Activated CD4-positive, alpha-beta memory T cell treated with anti-CD3 and anti-CD28 coated beads for 36 hours (primary cell): ENCODE measurements at regions of chr11 and their contacts with region 1.

Region 1: DNA sequence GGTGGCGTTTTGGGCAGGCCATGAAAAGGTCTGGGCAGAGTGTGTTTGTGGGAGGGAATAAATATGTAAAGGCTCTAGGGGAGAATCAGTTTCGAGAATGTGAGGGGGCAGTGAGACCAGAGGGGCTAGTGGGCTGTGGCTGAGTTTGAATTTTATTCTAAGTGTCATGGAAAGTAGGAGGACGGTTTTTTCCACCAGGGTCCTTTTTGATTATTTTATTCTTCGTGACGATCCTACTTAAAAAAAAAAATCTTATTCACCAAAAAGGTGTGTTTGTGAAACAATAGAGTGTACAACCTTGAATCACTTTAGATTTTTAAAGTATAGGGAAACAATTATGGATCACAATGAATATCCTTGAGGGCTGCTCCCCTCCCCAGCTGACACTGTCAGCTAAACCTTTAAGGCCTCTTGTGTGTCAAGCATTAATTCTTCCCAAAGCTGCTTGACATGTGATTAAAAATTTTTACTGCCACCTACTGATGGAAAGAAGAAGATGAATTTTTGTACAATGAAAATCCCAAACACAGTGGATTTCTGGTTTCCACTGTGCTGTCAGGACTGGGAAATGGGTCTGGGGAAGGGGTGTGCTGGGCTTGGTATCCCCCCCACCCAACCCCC is 107.5 kb upstream of the OR4B1 start:
- DNase-seq: no peak
- H3K4me3 Mint-ChIP-seq: no peak overlapping the region
- H3K27ac Mint-ChIP-seq: peak overlapping the region; percentile 92
- H3K4me1 Mint-ChIP-seq: peaks cover 47% of the 10 kb centered on the region
- H3K27me3 Mint-ChIP-seq: no peaks in the 10 kb centered on the region

Region 2: GRCh38 chr11:47766305-47767227 is 342.6 kb before region 1 on chr11:
- CTCF ChIA-PET with region 1: no interaction called
- POLR2A ChIA-PET with region 1: no interaction called
- intact Hi-C with region 1: loop called (anchors 2 kb)
- DNase-seq: peak; percentile 88
- H3K4me3 Mint-ChIP-seq: peak overlapping the region; percentile 91
- H3K27ac Mint-ChIP-seq: peak overlapping the region; percentile 100
- H3K4me1 Mint-ChIP-seq: peaks cover 18% of the 10 kb centered on the region
- H3K27me3 Mint-ChIP-seq: no peaks in the 10 kb centered on the region

Region 3: DNA sequence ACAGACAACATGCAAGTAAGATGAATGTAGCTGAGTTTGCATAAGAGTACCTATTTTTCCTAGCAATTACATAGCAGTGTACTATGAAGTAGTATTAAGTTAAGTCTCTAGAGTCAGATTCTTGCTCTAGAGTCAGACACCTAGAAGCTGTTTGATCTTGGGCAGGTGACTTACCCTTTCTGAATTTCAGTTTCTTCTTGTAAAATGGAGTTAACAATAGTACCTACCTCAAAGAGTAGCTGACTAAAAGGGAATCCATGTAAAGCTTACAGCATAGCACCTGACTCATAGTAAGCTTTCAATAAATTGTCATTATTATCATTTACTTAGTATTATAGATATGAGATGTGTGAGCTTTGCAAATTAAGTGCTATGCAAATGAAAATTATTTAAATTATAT is 176.6 kb before region 1 on chr11:
- CTCF ChIA-PET with region 1: interaction called, 227 read pairs
- POLR2A ChIA-PET with region 1: interaction called, 8 read pairs
- intact Hi-C with region 1: loop called (anchors 1 kb)
- DNase-seq: no peak
- H3K4me3 Mint-ChIP-seq: no peak overlapping the region
- H3K27ac Mint-ChIP-seq: no peak overlapping the region
- H3K4me1 Mint-ChIP-seq: peaks cover 16% of the 10 kb centered on the region
- H3K27me3 Mint-ChIP-seq: no peaks in the 10 kb centered on the region

Region 4: GRCh38 chr11:47981050-47981621 is 128.0 kb before region 1 on chr11:
- CTCF ChIA-PET with region 1: interaction called, 18 read pairs
- POLR2A ChIA-PET with region 1: interaction called, 5 read pairs
- intact Hi-C with region 1: no loop called
- DNase-seq: peak; percentile 39
- H3K4me3 Mint-ChIP-seq: peak overlapping the region; percentile 89
- H3K27ac Mint-ChIP-seq: peak overlapping the region; percentile 84
- H3K4me1 Mint-ChIP-seq: peaks cover 24% of the 10 kb centered on the region
- H3K27me3 Mint-ChIP-seq: no peaks in the 10 kb centered on the region

Region 5: GRCh38 chr11:48013269-48013901 is 95.8 kb before region 1 on chr11:
- CTCF ChIA-PET with region 1: interaction called, 12 read pairs
- POLR2A ChIA-PET with region 1: interaction called, 3 read pairs
- intact Hi-C with region 1: no loop called
- DNase-seq: peak; percentile 86
- H3K4me3 Mint-ChIP-seq: peak overlapping the region; percentile 63
- H3K27ac Mint-ChIP-seq: peak overlapping the region; percentile 96
- H3K4me1 Mint-ChIP-seq: peaks cover 88% of the 10 kb centered on the region
- H3K27me3 Mint-ChIP-seq: no peaks in the 10 kb centered on the region

Region 6: DNA sequence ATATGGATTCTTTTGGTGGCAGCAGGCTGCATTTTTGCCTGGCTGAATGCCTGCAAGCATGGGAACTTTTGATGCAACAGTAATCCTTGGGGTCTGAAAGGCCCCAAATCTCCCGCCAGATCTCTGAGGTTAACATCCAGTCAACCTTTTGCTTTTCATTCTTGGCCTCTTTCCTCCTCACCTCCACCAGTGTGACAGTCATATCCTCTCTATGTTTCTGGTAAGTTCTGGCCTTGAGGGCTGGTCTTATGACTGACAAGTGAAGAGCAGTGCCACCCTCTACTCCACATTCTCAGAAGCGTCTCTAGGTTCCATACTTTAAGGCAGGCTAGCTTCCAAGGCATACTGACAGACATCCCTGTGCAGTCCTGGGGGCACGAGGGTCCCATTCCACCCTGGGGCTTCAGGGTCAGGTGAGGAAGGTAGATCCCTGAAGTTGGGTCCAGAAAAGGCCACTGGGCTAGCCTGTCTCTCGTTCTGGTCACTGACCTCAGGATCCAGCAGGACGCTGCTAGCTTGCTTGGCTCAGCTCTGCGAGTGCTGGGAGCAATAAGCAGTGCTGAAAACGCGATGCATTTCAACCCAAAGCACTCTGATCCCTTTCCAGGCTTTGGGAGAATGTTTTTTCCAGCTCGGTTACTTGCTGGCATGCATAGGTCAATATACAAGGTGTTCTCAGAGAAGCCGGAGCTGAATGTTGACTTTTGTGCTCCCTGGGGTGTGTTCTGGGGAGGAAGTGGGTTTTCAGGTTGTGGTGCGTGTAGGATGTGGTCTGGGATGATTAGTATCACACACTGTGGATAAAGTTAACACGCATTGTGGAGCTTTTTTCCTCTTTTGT is 53.6 kb before region 1 on chr11:
- CTCF ChIA-PET with region 1: interaction called, 55 read pairs
- POLR2A ChIA-PET with region 1: interaction called, 7 read pairs
- intact Hi-C with region 1: loop called (anchors 1 kb)
- DNase-seq: peak; percentile 88
- H3K4me3 Mint-ChIP-seq: peak overlapping the region; percentile 65
- H3K27ac Mint-ChIP-seq: peak overlapping the region; percentile 91
- H3K4me1 Mint-ChIP-seq: peaks cover 80% of the 10 kb centered on the region
- H3K27me3 Mint-ChIP-seq: no peaks in the 10 kb centered on the region

Region 7: GRCh38 chr11:48384670-48385069 is 275.5 kb after region 1 on chr11:
- CTCF ChIA-PET with region 1: no interaction called
- POLR2A ChIA-PET with region 1: no interaction called
- intact Hi-C with region 1: no loop called
- DNase-seq: no peak
- H3K4me3 Mint-ChIP-seq: no peak overlapping the region
- H3K27ac Mint-ChIP-seq: no peak overlapping the region
- H3K4me1 Mint-ChIP-seq: no peaks in the 10 kb centered on the region
- H3K27me3 Mint-ChIP-seq: no peaks in the 10 kb centered on the region